Gastrocnemius medialis (tissue), 4 donors: ENCODE measurements at regions of chr11 and their contacts with region 1.

Region 1: GRCh38 chr11:130131961-130132850 is 27.4 kb upstream of the ST14 start:
- DNase-seq: peak in 1 of 2 donors; percentile 38
- ATAC-seq: peak; percentile 76 to 95
- H3K4me3 ChIP-seq: no peak overlapping the region
- H3K27ac ChIP-seq: no peak overlapping the region
- H3K4me1 ChIP-seq: peaks cover 12% of the 10 kb centered on the region in 2 donors
- H3K27me3 ChIP-seq: no peaks in the 10 kb centered on the region
- CTCF ChIP-seq: peak; percentile 59 to 80 (median 74)
- POLR2A ChIP-seq: no peak

Region 2: DNA sequence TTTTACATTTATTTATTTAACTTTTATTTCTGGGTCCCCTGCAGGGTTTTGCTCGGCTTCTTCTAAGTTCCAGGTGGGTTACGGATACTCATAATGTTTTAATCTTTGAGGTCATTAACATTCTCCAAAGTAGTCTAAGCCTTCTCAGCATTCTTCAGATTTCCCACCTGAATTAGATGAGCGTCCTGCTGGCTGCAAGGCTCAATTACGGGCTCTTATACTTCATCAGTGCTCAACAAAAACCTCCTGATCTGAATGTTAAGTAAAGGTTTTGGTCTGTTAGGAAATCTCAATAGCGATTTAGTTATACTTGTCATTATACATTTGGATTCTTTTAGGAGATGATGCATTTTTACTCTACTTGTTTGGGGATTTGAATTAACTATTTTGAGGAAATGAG is 209.5 kb before region 1 on chr11:
- in situ Hi-C with region 1: loop called (anchors 5 kb)
- intact Hi-C with region 1: loop called (anchors 1 kb)
- DNase-seq: no peak
- ATAC-seq: no peak
- H3K4me3 ChIP-seq: no peak overlapping the region
- H3K27ac ChIP-seq: no peak overlapping the region
- H3K4me1 ChIP-seq: peaks cover 0 to 3% of the 10 kb centered on the region in 2 donors
- H3K27me3 ChIP-seq: no peaks in the 10 kb centered on the region
- CTCF ChIP-seq: no peak
- POLR2A ChIP-seq: no peak

Region 3: GRCh38 chr11:129930296-129930695 is 201.9 kb before region 1 on chr11:
- in situ Hi-C with region 1: loop called in 3 of 4 experiments (anchors 5 kb)
- intact Hi-C with region 1: no loop called
- DNase-seq: no peak
- ATAC-seq: no peak
- H3K4me3 ChIP-seq: no peak overlapping the region
- H3K27ac ChIP-seq: no peak overlapping the region
- H3K4me1 ChIP-seq: no peaks in the 10 kb centered on the region
- H3K27me3 ChIP-seq: no peaks in the 10 kb centered on the region
- CTCF ChIP-seq: no peak
- POLR2A ChIP-seq: no peak

Region 4: DNA sequence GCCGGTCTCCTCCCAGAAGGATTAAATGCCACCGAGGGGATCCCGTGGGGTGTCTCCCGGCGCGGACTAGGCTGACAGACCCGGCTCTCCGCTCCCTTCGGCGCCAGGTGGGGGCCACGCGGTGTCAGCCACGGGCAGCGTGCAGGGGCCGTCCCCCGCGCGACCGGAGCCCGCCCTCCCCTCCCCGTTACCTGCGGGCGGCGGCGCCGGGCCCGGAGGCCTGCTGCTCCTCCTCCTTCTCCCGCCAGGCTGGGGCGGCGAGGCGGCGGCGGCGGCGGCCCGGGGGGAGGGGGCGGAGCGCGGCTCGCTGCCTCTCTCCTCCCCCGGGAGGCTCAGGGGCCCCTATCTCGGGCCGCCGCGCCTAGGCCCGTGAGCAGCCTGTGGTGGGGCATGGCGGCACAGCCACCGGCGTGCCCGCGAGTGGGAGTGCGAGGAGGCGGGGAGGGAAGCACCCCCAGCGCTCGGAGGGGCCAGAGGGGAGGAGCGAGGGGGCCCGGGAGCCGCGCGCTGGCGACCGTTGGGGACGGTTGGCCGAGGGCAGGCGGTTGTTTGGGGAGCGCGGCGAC is 182.1 kb after region 1 on chr11:
- in situ Hi-C with region 1: no loop called
- intact Hi-C with region 1: no loop called
- DNase-seq: peak; percentile 56 to 69
- ATAC-seq: peak; percentile 74 to 78
- H3K4me3 ChIP-seq: peak overlapping the region; percentile 79 to 90 (median 86)
- H3K27ac ChIP-seq: peak overlapping the region; percentile 93 to 99 (median 95)
- H3K4me1 ChIP-seq: peaks cover 33 to 42% of the 10 kb centered on the region in 2 donors
- H3K27me3 ChIP-seq: no peaks in the 10 kb centered on the region
- CTCF ChIP-seq: no peak
- POLR2A ChIP-seq: peak; percentile 37 to 55